Activated CD8-positive, alpha-beta memory T cell treated with anti-CD3 and anti-CD28 coated beads, Interleukin-2, amount 10 ng/mL, durations not matched to agents 7 days and 5 days (primary cell): ENCODE measurements at regions of chr10 and their contacts with region 1.

Region 1: GRCh38 chr10:95688648-95689047 is 5.1 kb downstream of the TCTN3 start:
- DNase-seq: no peak
- ATAC-seq: no peak
- H3K4me3 Mint-ChIP-seq: no peak overlapping the region
- H3K27ac Mint-ChIP-seq: no peak overlapping the region
- H3K4me1 Mint-ChIP-seq: peaks cover 46% of the 10 kb centered on the region
- H3K27me3 Mint-ChIP-seq: no peaks in the 10 kb centered on the region

Region 2: GRCh38 chr10:94706089-94706488 is 982.6 kb before region 1 on chr10:
- CTCF ChIA-PET with region 1: no interaction called
- DNase-seq: no peak
- ATAC-seq: no peak
- H3K4me3 Mint-ChIP-seq: no peak overlapping the region
- H3K27ac Mint-ChIP-seq: no peak overlapping the region
- H3K4me1 Mint-ChIP-seq: no peaks in the 10 kb centered on the region
- H3K27me3 Mint-ChIP-seq: no peaks in the 10 kb centered on the region

Region 3: DNA sequence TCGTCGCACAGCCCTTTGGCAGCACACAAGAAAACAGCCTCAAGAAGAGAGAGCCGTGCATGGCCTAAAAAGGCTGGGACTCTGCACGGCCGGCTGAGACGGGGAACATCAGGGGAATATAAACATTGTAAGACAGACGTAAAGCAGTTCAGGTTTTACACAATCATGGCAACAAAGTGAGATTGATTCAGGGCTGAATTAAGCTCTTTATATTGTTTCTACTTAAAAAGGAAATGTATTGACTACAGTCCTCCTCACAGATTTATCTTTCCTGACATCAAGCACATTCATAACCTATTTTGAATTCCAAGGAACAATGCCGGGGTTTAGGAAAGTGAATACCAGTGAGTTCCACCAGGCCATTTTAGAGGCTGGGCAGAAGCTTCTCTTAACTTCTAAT is 152.6 kb before region 1 on chr10:
- CTCF ChIA-PET with region 1: no interaction called
- DNase-seq: no peak
- ATAC-seq: no peak
- H3K4me3 Mint-ChIP-seq: no peak overlapping the region
- H3K27ac Mint-ChIP-seq: no peak overlapping the region
- H3K4me1 Mint-ChIP-seq: no peaks in the 10 kb centered on the region
- H3K27me3 Mint-ChIP-seq: no peaks in the 10 kb centered on the region

Region 4: DNA sequence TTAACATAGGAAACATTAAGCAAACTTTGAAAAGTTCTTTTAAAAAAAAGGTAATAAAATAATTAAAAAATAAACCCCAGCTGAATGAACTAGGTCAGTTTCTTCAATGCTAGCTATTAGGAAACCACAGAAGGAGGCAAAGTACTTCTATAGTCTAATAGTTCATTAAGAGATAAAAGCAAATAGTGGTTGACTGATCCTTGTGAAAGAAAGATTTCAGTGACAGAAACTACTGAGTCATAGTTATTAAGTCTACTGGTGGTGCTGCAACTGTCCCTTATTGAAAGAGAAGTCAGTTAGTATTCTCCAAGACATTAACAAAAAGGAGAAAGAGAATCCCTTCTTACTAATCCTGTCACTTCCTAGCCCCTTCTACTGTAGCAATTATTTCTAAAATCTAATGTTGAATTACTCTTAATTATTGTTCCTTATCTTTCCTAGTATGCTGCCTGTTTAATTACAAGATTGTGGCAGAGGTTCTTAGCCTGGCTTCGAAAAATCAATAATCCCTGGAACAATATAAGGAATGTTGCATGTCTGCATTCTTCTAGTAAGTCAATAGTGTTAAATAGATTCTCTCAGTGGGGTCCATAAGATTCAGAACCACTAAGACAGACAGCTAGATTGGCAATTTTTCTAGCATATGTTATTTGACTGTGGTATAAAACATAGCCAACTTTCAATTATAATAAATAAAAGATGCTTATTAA is 13.1 kb before region 1 on chr10:
- CTCF ChIA-PET with region 1: interaction called, 16 read pairs
- DNase-seq: no peak
- ATAC-seq: no peak
- H3K4me3 Mint-ChIP-seq: no peak overlapping the region
- H3K27ac Mint-ChIP-seq: no peak overlapping the region
- H3K4me1 Mint-ChIP-seq: no peaks in the 10 kb centered on the region
- H3K27me3 Mint-ChIP-seq: no peaks in the 10 kb centered on the region